ENCODE measurements at regions of chr4 and their contacts with region 1.

Region 1: GRCh38 chr4:165327211-165328100 is at the start of gene MSMO1:
- DNase-seq: peak; percentile 100
- H3K4me3 ChIP-seq: peak within 1 kb of the TSS; percentile 80 to 98 (median 96)
- H3K27ac ChIP-seq: peak within 1 kb of the TSS; percentile 64
- H3K4me1 ChIP-seq: peaks cover 58% of the 10 kb centered on the region
- H3K27me3 ChIP-seq: no peaks in the 10 kb centered on the region
- CTCF ChIP-seq: no peak
- POLR2A ChIP-seq: no peak
- total RNA-seq, gene MSMO1: 109 and 127 TPM in 2 replicates

Region 2: DNA sequence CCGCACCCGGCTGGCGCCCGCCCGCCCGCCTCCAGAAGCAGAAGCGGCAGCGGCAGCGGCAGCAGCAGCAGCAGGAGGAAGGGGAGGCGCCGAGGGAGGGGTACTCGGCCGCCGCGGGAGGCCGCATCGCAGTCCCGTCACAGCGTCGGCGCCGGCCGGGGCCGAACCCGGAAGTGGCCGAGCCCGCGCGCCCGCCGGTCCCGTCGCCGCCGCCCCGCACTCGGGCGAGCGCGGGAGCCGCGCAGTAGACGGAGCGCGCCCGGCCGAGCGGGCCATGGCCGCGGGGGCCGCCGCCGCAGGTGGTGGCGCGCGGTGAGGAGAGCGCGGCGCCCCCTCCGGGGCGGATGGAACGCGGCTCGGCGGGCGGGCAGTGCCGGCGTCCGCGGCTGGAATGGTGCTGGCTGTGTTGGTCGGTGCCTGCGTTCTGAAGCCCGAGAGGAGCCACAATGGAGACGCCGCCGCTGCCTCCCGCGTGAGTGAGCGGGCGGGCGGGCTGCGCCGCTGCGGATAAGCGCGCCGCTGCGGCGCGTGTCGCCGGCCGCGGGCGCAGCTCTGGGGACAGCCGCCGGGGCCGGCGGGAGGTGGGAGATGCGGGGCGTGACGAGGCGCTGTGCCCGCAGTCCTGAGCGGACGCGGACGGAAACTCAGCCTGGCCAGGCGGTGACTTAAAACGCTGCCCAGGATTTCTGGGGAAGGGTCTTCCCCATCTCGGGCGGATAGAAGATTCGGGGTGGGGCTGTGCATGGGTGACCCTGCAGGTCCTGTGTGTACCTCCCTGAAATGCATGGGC is 119.8 kb before region 1 on chr4 and contains the start of gene KLHL2:
- CTCF ChIA-PET with region 1: no interaction called
- POLR2A ChIA-PET with region 1: interaction called, 6 read pairs
- dilution Hi-C with region 1: no loop called
- intact Hi-C with region 1: loop called (anchors 1 kb)
- DNase-seq: peak; percentile 80
- H3K4me3 ChIP-seq: peak within 1 kb of the TSS; percentile 95 to 98 (median 97)
- H3K27ac ChIP-seq: peak within 1 kb of the TSS; percentile 58
- H3K4me1 ChIP-seq: peaks cover 22% of the 10 kb centered on the region
- H3K27me3 ChIP-seq: no peaks in the 10 kb centered on the region
- CTCF ChIP-seq: no peak
- POLR2A ChIP-seq: peak; percentile 73
- total RNA-seq, gene KLHL2: 22.1 and 22.9 TPM in 2 replicates

Region 3: DNA sequence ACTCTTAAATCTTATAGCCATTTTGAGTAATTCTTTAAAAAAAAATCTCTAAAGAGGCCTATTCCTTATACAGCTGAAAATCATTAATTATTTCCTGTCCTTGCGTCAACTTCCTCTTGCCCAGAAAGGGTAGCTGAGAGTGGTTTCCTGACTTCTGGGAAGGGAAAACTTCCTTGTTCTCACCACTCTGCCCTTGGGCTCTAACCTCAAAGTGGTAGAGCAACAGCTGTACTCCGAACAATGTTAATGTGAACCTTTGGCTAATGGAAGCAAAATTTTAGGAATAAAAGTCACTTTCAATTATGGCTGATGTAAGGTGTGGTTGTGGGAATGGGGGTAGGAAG is 104.8 kb before region 1 on chr4:
- CTCF ChIA-PET with region 1: no interaction called
- POLR2A ChIA-PET with region 1: no interaction called
- dilution Hi-C with region 1: no loop called
- intact Hi-C with region 1: loop called (anchors 1 kb)
- DNase-seq: peak; percentile 90
- H3K4me3 ChIP-seq: no peak overlapping the region
- H3K27ac ChIP-seq: peak overlapping the region; percentile 96
- H3K4me1 ChIP-seq: peaks cover 20% of the 10 kb centered on the region
- H3K27me3 ChIP-seq: no peaks in the 10 kb centered on the region
- CTCF ChIP-seq: no peak
- POLR2A ChIP-seq: no peak

Region 4: GRCh38 chr4:165248102-165248501 is 79.4 kb before region 1 on chr4:
- CTCF ChIA-PET with region 1: no interaction called
- POLR2A ChIA-PET with region 1: no interaction called
- dilution Hi-C with region 1: no loop called
- intact Hi-C with region 1: no loop called
- DNase-seq: no peak
- H3K4me3 ChIP-seq: no peak overlapping the region
- H3K27ac ChIP-seq: no peak overlapping the region
- H3K4me1 ChIP-seq: no peaks in the 10 kb centered on the region
- H3K27me3 ChIP-seq: no peaks in the 10 kb centered on the region
- CTCF ChIP-seq: no peak
- POLR2A ChIP-seq: no peak

Region 5: DNA sequence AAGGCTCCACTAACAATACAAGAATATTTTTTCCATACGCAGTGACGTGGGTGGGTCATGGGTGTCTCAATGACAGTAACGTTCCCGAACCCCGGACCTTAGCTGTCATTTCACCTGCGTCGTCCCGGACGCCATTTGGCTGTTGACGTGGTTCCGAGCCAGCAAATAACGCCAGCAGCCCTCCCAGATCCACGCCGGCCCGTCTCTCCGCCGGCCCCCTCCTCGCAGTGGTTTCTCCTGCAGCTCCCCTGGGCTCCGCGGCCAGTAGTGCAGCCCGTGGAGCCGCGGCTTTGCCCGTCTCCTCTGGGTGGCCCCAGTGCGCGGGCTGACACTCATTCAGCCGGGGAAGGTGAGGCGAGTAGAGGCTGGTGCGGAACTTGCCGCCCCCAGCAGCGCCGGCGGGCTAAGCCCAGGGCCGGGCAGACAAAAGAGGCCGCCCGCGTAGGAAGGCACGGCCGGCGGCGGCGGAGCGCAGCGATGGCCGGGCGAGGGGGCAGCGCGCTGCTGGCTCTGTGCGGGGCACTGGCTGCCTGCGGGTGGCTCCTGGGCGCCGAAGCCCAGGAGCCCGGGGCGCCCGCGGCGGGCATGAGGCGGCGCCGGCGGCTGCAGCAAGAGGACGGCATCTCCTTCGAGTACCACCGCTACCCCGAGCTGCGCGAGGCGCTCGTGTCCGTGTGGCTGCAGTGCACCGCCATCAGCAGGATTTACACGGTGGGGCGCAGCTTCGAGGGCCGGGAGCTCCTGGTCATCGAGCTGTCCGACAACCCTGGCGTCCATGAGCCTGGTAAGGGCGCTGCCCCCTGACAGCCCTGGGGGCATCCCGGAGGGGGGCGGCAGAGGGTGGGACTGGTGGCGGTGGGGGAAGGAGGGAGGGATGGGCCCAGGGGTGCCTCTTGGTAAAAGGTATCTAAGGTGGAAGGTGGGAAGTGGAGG is 51.6 kb after region 1 on chr4 and contains the start of gene CPE:
- CTCF ChIA-PET with region 1: interaction called, 3 read pairs
- POLR2A ChIA-PET with region 1: no interaction called
- dilution Hi-C with region 1: no loop called
- intact Hi-C with region 1: loop called (anchors 2 kb)
- DNase-seq: peak; percentile 80
- H3K4me3 ChIP-seq: peak within 1 kb of the TSS; percentile 30 to 70 (median 49)
- H3K27ac ChIP-seq: no peak within 1 kb of the TSS
- H3K4me1 ChIP-seq: peaks cover 4% of the 10 kb centered on the region
- H3K27me3 ChIP-seq: peaks cover 2 to 4% of the 10 kb centered on the region in 2 experiments
- CTCF ChIP-seq: peak; percentile 37 to 89
- POLR2A ChIP-seq: no peak
- total RNA-seq, gene CPE: 8.1 and 9.2 TPM in 2 replicates